ENCODE measurements at regions of chr6 and their contacts with region 1.

Region 1: DNA sequence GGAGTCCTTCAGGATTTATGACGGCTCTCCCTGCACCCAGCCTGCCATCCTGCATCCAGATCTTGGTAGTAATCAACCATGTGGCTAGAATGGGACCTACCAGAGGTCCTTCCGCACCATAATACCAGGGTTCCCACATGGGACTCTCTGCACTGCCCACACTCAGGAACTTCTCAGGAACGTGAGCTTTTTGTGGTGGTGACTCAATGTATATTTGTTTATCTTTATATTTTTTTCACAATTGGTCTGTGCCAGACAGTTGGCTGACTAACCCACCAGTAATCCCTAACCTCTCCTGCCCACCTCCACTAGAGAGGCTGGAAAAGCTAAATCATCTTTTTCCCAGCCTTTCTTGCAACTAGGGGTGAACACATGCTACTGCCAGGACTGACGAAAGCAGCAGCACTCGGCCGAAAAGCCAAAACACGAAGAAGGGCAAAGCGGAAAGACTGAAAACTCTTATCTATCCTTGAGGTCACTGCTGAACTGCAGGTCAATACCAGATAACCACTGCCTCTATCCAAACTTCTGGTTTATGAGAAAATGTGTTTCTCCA is 113.0 kb downstream of the TRERF1 start:
- DNase-seq: no peak
- H3K4me3 Mint-ChIP-seq: peak overlapping the region; percentile 49
- H3K27ac Mint-ChIP-seq: peak overlapping the region; percentile 89
- H3K4me1 Mint-ChIP-seq: peaks cover 84% of the 10 kb centered on the region
- H3K27me3 Mint-ChIP-seq: no peaks in the 10 kb centered on the region

Region 2: DNA sequence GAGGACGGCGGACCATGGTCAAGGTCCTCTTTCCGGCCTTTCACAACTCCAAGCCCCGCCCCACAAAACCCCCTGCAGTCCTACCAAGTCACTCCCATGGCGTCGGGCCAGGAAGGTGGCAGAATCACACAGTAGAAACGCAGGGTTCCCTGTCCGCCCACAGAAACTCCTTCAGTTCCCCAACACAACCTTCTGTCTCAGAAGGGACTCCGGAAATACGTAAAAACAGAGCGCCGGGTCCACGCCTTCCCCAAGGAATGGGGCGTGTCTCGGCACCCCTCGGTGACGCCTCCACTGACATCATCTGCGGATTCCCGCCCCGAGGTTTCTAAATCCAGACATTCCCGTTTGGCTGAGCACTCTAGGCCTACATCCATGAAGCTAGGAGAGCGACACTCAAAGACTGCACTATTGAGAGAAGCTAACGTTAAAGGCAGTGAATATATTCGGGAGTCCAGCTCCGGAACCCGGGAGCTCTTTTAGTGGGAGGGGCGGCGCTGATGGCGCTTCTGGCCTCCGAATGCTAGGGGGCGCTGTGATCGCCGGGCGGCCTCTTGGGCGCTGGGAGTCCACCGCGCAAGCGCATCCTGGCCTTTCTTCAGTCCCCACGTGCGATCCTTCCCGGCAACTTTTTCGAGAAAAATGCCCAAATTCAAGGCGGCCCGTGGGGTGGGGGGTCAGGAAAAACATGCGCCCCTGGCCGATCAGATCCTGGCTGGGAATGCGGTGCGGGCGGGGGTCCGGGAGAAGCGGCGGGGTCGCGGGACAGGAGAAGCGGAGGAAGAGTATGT is 417.6 kb before region 1 on chr6 and contains the starts of genes BYSL and MED20:
- intact Hi-C with region 1: no loop called
- DNase-seq: peak; percentile 89
- H3K4me3 Mint-ChIP-seq: peak within 1 kb of the TSS; percentile 98
- H3K27ac Mint-ChIP-seq: peak within 1 kb of the TSS; percentile 98
- H3K4me1 Mint-ChIP-seq: peaks cover 53% of the 10 kb centered on the region
- H3K27me3 Mint-ChIP-seq: no peaks in the 10 kb centered on the region
- total RNA-seq, gene BYSL: 82.9 and 88.5 TPM in 2 replicates
- total RNA-seq, gene MED20: 19.0 and 23.8 TPM in 2 replicates

Region 3: DNA sequence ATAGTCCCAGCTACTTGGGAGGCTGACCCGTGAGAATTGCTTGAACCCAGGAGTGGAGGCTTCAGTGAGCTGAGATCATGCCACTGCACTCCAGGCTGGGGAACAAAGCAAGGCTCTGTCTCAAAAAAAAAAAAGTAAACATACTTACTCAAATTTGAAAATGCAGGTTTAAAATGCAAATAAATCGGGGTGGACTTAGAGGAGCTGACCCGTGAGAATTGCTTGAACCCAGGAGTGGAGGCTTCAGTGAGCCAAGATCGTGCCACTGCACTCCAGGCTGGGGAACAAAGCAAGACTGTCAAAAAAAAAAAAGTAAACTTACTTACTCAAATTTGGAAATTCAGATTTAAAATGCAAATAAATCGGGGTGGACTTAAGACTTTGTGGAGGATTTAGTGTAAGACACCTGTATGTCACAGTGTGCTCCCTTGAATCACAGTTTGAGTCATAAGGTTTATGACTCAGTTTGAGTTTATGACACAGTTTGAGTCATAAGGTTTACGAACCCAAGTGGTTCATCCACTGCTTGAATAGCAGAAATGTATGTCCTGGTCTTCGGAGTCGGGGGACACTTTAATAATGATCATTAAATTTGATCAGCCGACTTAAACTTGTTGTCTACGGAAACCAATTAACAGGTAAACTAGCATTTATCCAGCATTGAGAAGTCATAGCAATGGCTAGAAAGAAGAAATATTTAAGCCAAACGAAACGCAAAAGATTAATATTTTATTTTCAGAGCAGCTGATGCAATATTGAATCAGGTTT is 114.3 kb before region 1 on chr6:
- intact Hi-C with region 1: loop called (anchors 1 kb)
- DNase-seq: no peak
- H3K4me3 Mint-ChIP-seq: peak overlapping the region; percentile 61
- H3K27ac Mint-ChIP-seq: peak overlapping the region; percentile 85
- H3K4me1 Mint-ChIP-seq: peaks cover 18% of the 10 kb centered on the region
- H3K27me3 Mint-ChIP-seq: no peaks in the 10 kb centered on the region

Region 4: DNA sequence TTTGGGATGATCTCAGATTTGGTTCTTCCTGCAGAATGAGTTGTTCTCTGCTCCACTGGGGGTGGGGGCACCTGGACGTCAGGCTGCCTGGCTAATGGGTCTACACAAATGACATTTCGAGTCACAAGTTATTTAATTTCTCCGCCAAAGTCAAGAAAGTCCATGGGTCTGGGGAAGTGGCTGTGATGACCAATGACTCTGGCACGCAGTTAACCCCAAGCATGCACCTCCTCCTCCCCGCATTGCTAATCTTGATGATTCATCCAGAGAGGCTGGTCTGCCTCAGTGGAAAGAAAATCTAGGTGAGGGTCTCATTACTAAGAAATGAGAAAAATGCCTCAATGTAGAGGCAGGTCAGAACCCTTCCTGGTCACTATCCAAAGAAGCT is 22.8 kb before region 1 on chr6:
- intact Hi-C with region 1: loop called (anchors 1 kb)
- DNase-seq: no peak
- H3K4me3 Mint-ChIP-seq: no peak overlapping the region
- H3K27ac Mint-ChIP-seq: peak overlapping the region; percentile 80
- H3K4me1 Mint-ChIP-seq: peaks cover 72% of the 10 kb centered on the region
- H3K27me3 Mint-ChIP-seq: no peaks in the 10 kb centered on the region

Region 5: GRCh38 chr6:42352856-42353564 is 14.3 kb after region 1 on chr6:
- intact Hi-C with region 1: loop called (anchors 1 kb)
- DNase-seq: no peak
- H3K4me3 Mint-ChIP-seq: no peak overlapping the region
- H3K27ac Mint-ChIP-seq: no peak overlapping the region
- H3K4me1 Mint-ChIP-seq: peaks cover 31% of the 10 kb centered on the region
- H3K27me3 Mint-ChIP-seq: no peaks in the 10 kb centered on the region

Region 6: GRCh38 chr6:42402184-42402583 is 63.4 kb after region 1 on chr6:
- intact Hi-C with region 1: loop called (anchors 1 kb)
- DNase-seq: peak; percentile 66
- H3K4me3 Mint-ChIP-seq: peak overlapping the region; percentile 68
- H3K27ac Mint-ChIP-seq: peak overlapping the region; percentile 87
- H3K4me1 Mint-ChIP-seq: peaks cover 82% of the 10 kb centered on the region
- H3K27me3 Mint-ChIP-seq: no peaks in the 10 kb centered on the region

Region 7: DNA sequence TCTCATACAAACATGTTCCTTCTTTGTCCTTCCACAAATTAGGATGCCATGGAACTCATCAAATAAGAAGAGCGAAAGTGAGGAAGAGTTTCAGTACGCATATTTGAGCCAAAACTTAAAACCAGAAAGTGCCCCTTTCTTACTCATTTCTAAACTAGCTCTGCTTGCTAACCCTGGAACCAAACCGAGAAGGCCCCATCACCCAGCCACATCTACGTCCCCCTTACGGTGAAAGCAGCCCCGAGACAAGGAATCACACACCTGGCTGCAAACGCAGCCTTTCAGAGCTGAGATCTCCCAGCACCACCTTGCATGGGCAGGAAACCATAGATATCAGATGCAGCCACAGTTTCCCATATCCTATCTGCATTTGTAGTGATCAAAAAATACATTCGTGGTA is 84.5 kb after region 1 on chr6:
- intact Hi-C with region 1: loop called (anchors 1 kb)
- DNase-seq: peak; percentile 21
- H3K4me3 Mint-ChIP-seq: peak overlapping the region; percentile 27
- H3K27ac Mint-ChIP-seq: peak overlapping the region; percentile 6
- H3K4me1 Mint-ChIP-seq: peaks cover 79% of the 10 kb centered on the region
- H3K27me3 Mint-ChIP-seq: no peaks in the 10 kb centered on the region

Region 8: DNA sequence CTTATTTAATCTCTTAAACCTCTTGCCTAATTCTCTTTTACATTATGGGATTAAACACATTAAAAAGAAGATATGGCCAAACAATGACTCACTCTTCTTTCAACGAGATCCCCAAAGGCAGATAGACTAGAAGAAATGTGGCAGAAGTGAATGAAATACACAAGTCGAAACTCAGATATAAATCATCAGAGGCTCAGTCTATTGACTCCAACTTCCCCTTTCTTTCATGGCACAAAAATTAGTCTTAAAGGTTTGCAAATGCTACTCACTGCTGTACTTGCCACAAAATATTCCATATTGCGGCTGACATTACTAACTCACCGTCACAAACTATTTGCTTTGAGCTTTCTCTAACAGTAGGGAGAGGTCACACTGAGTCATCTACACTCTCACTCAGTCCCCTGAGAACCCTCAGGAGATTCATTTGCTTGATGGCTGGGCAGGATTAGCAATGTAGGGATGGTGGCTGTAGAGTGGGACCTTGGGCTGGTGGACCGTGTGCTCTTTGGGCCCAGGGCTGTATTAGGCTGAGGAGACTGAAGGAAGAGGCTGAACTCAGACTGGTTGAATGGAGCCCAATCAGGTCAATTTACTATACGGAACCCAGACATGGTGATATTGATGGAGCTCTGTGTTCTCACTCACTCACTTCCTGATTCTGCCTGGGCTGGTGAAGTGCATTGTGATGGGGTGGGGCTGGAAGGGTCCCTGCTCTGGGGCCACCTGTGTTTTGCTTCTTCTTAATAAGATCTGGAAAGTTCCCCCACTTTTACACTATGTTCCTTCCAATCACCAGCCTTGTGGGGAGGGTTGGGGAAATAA is 182.3 kb after region 1 on chr6:
- intact Hi-C with region 1: loop called (anchors 1 kb)
- DNase-seq: no peak
- H3K4me3 Mint-ChIP-seq: peak overlapping the region; percentile 9
- H3K27ac Mint-ChIP-seq: peak overlapping the region; percentile 89
- H3K4me1 Mint-ChIP-seq: peaks cover 16% of the 10 kb centered on the region
- H3K27me3 Mint-ChIP-seq: peaks cover 4% of the 10 kb centered on the region

Measured in activated T-helper 1 cell treated with anti-CD3 and anti-CD28 coated beads, Interleukin-12 subunit alpha, Interleukin-12 subunit beta, Interleukin-2, Interleukin-4 antibody, amounts not matched to agents 30 ng/mL and 10 ng/mL and 1 ng/mL, durations not matched to agents 14 hours and 24 hours and 36 hours (primary cell).